GM12878 (cell line): ENCODE measurements at regions of chr22 and their contacts with region 1.

Region 1: GRCh38 chr22:18024276-18024947 is at the start of gene MICAL3:
- DNase-seq: no peak
- ATAC-seq: peak; percentile 96
- H3K4me3 ChIP-seq: peak within 1 kb of the TSS; percentile 79
- H3K27ac ChIP-seq: no peak within 1 kb of the TSS
- H3K4me1 ChIP-seq: peaks cover 7% of the 10 kb centered on the region
- H3K27me3 ChIP-seq: no peaks in the 10 kb centered on the region; a peak in 2 of 4 replicates
- CTCF ChIP-seq: peak; percentile 58 to 83 (median 76); a peak in 4 of 6 replicates
- EP300 ChIP-seq: no peak
- POLR2A ChIP-seq: no peak
- RAD21 ChIP-seq: peak; percentile 75
- polyA plus RNA-seq, gene MICAL3: 2.6 to 3.3 TPM

Region 2: DNA sequence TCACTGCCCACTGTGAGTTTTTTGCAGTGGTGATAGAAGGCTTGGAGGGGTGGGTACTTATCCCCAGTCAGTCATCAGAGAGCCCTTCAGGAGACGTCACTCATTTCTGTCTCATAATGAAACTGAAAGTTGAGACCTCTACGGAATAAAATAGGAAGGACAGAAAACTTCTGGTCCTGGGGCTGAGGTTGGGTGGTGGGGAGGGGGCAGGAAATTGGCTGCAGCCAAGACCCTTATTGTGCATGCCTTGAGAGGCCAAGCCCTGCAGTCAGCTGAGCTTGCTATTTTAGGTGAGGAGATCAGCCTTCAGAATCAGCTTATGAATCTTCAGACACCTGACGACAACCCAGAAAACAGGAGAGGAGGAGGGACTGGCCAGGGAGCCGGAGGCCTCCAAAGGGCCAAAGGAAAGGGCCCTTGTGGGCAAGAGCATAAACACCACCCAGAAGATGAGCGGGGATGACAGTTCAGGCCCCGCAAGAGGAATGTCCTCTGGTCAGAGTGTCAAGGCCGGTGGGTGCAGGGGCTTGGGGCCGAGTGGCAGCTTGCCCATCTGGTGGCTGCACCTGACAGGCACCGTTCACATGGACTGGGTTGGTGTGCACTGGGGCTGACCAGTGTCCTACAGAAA is 787.3 kb before region 1 on chr22:
- CTCF ChIA-PET with region 1: no interaction called
- POLR2A ChIA-PET with region 1: no interaction called
- RAD21 ChIA-PET with region 1: no interaction called
- SMC1A ChIA-PET with region 1: no interaction called
- in situ Hi-C with region 1: no loop called
- intact Hi-C with region 1: no loop called
- DNase-seq: peak; percentile 71
- ATAC-seq: peak; percentile 92
- H3K4me3 ChIP-seq: peak overlapping the region; percentile 57
- H3K27ac ChIP-seq: peak overlapping the region; percentile 83
- H3K4me1 ChIP-seq: peaks cover 22% of the 10 kb centered on the region
- H3K27me3 ChIP-seq: no peaks in the 10 kb centered on the region
- CTCF ChIP-seq: no peak
- EP300 ChIP-seq: peak; percentile 31 to 55; a peak in 2 of 4 replicates
- POLR2A ChIP-seq: no peak; the same call in 1 of the 2 replicates
- RAD21 ChIP-seq: no peak

Region 3: DNA sequence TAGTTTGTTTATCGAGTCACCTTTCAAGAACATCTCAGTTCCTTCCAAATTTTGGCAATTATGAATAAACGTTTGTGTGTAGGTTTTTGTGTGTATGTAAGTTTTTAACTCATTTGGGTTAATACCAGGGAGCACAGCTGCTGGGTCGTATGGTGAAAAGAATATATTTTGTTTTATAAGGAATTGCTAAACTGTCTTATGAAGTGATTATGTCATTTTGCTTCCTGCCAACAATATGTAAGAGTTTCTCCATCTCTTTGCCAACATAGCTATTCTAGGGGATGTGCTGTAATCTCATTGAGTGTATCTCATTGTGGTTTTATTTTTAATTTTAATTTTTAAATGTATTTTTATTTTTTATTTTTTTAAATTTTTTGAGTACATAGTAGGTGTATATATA is 358.6 kb before region 1 on chr22:
- CTCF ChIA-PET with region 1: no interaction called
- POLR2A ChIA-PET with region 1: no interaction called
- RAD21 ChIA-PET with region 1: no interaction called
- SMC1A ChIA-PET with region 1: no interaction called
- in situ Hi-C with region 1: no loop called
- intact Hi-C with region 1: no loop called
- DNase-seq: no peak
- ATAC-seq: no peak
- H3K4me3 ChIP-seq: no peak overlapping the region
- H3K27ac ChIP-seq: no peak overlapping the region
- H3K4me1 ChIP-seq: no peaks in the 10 kb centered on the region
- H3K27me3 ChIP-seq: no peaks in the 10 kb centered on the region
- CTCF ChIP-seq: no peak
- EP300 ChIP-seq: no peak
- POLR2A ChIP-seq: no peak
- RAD21 ChIP-seq: no peak

Region 4: GRCh38 chr22:17830043-17830961 is 194.1 kb before region 1 on chr22:
- CTCF ChIA-PET with region 1: interaction called, 8 read pairs
- POLR2A ChIA-PET with region 1: no interaction called
- RAD21 ChIA-PET with region 1: interaction called, 19 read pairs
- SMC1A ChIA-PET with region 1: interaction called, 5 read pairs
- in situ Hi-C with region 1: no loop called
- intact Hi-C with region 1: loop called (anchors 5 kb)
- DNase-seq: peak; percentile 51
- ATAC-seq: peak; percentile 97
- H3K4me3 ChIP-seq: no peak overlapping the region
- H3K27ac ChIP-seq: no peak overlapping the region
- H3K4me1 ChIP-seq: no peaks in the 10 kb centered on the region
- H3K27me3 ChIP-seq: no peaks in the 10 kb centered on the region
- CTCF ChIP-seq: peak; percentile 98 to 99 (median 98)
- EP300 ChIP-seq: no peak
- POLR2A ChIP-seq: no peak
- RAD21 ChIP-seq: peak; percentile 97

Region 5: GRCh38 chr22:17958166-17958565 is 66.2 kb before region 1 on chr22:
- CTCF ChIA-PET with region 1: no interaction called
- POLR2A ChIA-PET with region 1: interaction called, 12 read pairs
- RAD21 ChIA-PET with region 1: interaction called, 5 read pairs
- SMC1A ChIA-PET with region 1: interaction called, 3 read pairs
- in situ Hi-C with region 1: no loop called
- intact Hi-C with region 1: no loop called
- DNase-seq: no peak
- ATAC-seq: no peak
- H3K4me3 ChIP-seq: no peak overlapping the region
- H3K27ac ChIP-seq: no peak overlapping the region
- H3K4me1 ChIP-seq: peaks cover 4% of the 10 kb centered on the region; the same call in 1 of the 2 replicates
- H3K27me3 ChIP-seq: no peaks in the 10 kb centered on the region
- CTCF ChIP-seq: no peak
- EP300 ChIP-seq: no peak
- POLR2A ChIP-seq: no peak
- RAD21 ChIP-seq: no peak

Region 6: DNA sequence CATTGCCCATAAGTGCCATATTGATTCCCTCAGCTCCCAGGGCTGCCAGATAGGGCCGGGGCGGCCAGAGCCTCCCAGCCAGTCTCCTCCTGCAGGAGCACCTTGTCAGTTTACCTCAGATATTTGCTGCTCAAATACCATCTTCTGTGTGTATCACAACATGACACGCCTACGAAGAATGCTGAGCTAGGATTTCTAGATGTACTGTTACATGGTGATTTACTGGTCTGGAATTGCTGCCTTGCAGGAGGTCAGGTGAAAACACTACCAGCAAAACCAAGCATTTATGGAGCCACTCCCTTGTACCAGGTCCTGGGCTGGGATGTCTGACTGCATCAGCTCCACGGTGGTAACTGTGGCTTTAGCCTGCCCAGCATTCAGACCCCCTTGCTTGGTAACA is 11.9 kb before region 1 on chr22:
- CTCF ChIA-PET with region 1: interaction called, 17 read pairs
- POLR2A ChIA-PET with region 1: interaction called, 4 read pairs
- RAD21 ChIA-PET with region 1: interaction called, 8 read pairs
- SMC1A ChIA-PET with region 1: interaction called, 11 read pairs
- in situ Hi-C with region 1: no loop called
- intact Hi-C with region 1: no loop called
- DNase-seq: no peak
- ATAC-seq: no peak
- H3K4me3 ChIP-seq: no peak overlapping the region
- H3K27ac ChIP-seq: no peak overlapping the region
- H3K4me1 ChIP-seq: peaks cover 11% of the 10 kb centered on the region
- H3K27me3 ChIP-seq: no peaks in the 10 kb centered on the region
- CTCF ChIP-seq: no peak
- EP300 ChIP-seq: no peak
- POLR2A ChIP-seq: no peak
- RAD21 ChIP-seq: no peak

Region 7: GRCh38 chr22:18065256-18065655 is 40.8 kb after region 1 on chr22:
- CTCF ChIA-PET with region 1: interaction called, 3 read pairs
- POLR2A ChIA-PET with region 1: interaction called, 3 read pairs
- RAD21 ChIA-PET with region 1: interaction called, 4 read pairs
- SMC1A ChIA-PET with region 1: interaction called, 98 read pairs
- in situ Hi-C with region 1: no loop called
- intact Hi-C with region 1: loop called (anchors 5 kb)
- DNase-seq: no peak
- ATAC-seq: peak; percentile 30
- H3K4me3 ChIP-seq: no peak overlapping the region
- H3K27ac ChIP-seq: no peak overlapping the region
- H3K4me1 ChIP-seq: peaks cover 17% of the 10 kb centered on the region
- H3K27me3 ChIP-seq: no peaks in the 10 kb centered on the region
- CTCF ChIP-seq: peak in 1 of 3 experiments; percentile 19; a peak in 1 of 6 replicates
- EP300 ChIP-seq: no peak
- POLR2A ChIP-seq: no peak
- RAD21 ChIP-seq: no peak